Activated B cell treated with CpG ODN at 0.5 μM for 24 hours (primary cell): ENCODE measurements at regions of chr19 and their contacts with region 1.

Region 1: GRCh38 chr19:53103198-53103944 is at the start of gene ZNF160:
- DNase-seq: peak; percentile 100
- ATAC-seq: peak; percentile 97
- H3K4me3 Mint-ChIP-seq: peak within 1 kb of the TSS; percentile 87
- H3K27ac Mint-ChIP-seq: peak within 1 kb of the TSS; percentile 93
- H3K4me1 Mint-ChIP-seq: peaks cover 32% of the 10 kb centered on the region
- H3K27me3 Mint-ChIP-seq: no peaks in the 10 kb centered on the region
- CTCF ChIP-seq: no peak
- total RNA-seq, gene ZNF160: 46.3 and 61.3 TPM in 2 replicates

Region 2: DNA sequence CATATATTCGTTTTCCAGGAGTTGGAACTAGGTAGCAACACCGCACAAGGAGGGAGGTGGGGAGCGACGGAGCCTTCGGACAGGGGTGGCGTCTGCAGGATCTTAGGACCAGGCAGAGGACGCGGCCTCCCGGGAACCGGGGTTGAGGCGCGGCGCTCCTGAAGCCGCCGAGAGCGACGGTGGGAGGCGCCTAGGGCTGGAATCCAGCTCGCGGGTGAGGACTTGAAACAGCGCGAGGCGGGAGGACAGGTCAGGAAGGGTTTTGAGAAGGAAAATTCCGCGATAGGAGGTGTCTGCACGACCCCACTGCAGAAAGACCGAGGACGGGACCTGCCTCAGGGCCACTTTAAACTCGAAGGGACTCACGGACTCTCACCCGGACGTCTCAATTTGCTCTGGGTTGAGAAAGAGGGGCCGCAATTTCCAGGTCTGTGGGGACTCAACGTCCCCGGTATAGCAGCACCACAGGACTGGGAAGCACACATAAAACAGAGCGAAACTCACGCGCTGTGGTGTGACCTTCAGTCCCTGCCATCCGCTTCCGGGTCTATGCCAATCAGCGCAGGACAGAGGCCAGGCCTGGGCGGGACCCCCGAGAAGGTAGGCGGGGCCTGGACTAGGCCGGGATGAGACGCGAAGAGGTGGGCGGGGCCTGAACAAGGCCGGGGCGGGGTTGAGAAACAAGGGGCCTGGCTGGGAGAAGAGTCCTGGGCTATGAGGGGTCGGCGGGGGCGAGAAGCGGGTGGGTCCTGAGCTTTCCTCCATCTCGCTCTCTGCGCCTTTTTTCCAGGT is 206.0 kb before region 1 on chr19 and contains the start of gene ZNF320:
- CTCF ChIA-PET with region 1: no interaction called
- POLR2A ChIA-PET with region 1: no interaction called
- intact Hi-C with region 1: loop called (anchors 1 kb)
- DNase-seq: peak; percentile 95
- ATAC-seq: peak; percentile 100
- H3K4me3 Mint-ChIP-seq: peak within 1 kb of the TSS; percentile 95
- H3K27ac Mint-ChIP-seq: peak within 1 kb of the TSS; percentile 94
- H3K4me1 Mint-ChIP-seq: peaks cover 15% of the 10 kb centered on the region
- H3K27me3 Mint-ChIP-seq: no peaks in the 10 kb centered on the region
- CTCF ChIP-seq: no peak
- total RNA-seq, gene ZNF320: 23.0 and 24.0 TPM in 2 replicates

Region 3: GRCh38 chr19:52993323-52994178 is 109.8 kb before region 1 on chr19:
- CTCF ChIA-PET with region 1: no interaction called
- POLR2A ChIA-PET with region 1: no interaction called
- intact Hi-C with region 1: loop called (anchors 2 kb)
- DNase-seq: peak; percentile 70
- ATAC-seq: peak; percentile 97
- H3K4me3 Mint-ChIP-seq: peak overlapping the region; percentile 84
- H3K27ac Mint-ChIP-seq: no peak overlapping the region
- H3K4me1 Mint-ChIP-seq: peaks cover 11% of the 10 kb centered on the region
- H3K27me3 Mint-ChIP-seq: peaks cover 5% of the 10 kb centered on the region
- CTCF ChIP-seq: no peak

Region 4: GRCh38 chr19:53195265-53195903 is 92.0 kb after region 1 on chr19:
- CTCF ChIA-PET with region 1: no interaction called
- POLR2A ChIA-PET with region 1: no interaction called
- intact Hi-C with region 1: loop called (anchors 1 kb)
- DNase-seq: peak; percentile 50
- ATAC-seq: peak; percentile 48
- H3K4me3 Mint-ChIP-seq: peak overlapping the region; percentile 39
- H3K27ac Mint-ChIP-seq: peak overlapping the region; percentile 30
- H3K4me1 Mint-ChIP-seq: peaks cover 41% of the 10 kb centered on the region
- H3K27me3 Mint-ChIP-seq: no peaks in the 10 kb centered on the region
- CTCF ChIP-seq: no peak

Region 5: GRCh38 chr19:53365134-53365898 is 261.9 kb after region 1 on chr19 and contains the start of gene ZNF525:
- CTCF ChIA-PET with region 1: no interaction called
- POLR2A ChIA-PET with region 1: no interaction called
- intact Hi-C with region 1: loop called (anchors 1 kb)
- DNase-seq: peak; percentile 98
- ATAC-seq: peak; percentile 99
- H3K4me3 Mint-ChIP-seq: peak within 1 kb of the TSS; percentile 96
- H3K27ac Mint-ChIP-seq: peak within 1 kb of the TSS; percentile 98
- H3K4me1 Mint-ChIP-seq: peaks cover 34% of the 10 kb centered on the region
- H3K27me3 Mint-ChIP-seq: no peaks in the 10 kb centered on the region
- CTCF ChIP-seq: no peak
- total RNA-seq, gene ZNF525: 28.9 and 37.4 TPM in 2 replicates